ENCODE measurements at regions of chr1 and their contacts with region 1.

Region 1: DNA sequence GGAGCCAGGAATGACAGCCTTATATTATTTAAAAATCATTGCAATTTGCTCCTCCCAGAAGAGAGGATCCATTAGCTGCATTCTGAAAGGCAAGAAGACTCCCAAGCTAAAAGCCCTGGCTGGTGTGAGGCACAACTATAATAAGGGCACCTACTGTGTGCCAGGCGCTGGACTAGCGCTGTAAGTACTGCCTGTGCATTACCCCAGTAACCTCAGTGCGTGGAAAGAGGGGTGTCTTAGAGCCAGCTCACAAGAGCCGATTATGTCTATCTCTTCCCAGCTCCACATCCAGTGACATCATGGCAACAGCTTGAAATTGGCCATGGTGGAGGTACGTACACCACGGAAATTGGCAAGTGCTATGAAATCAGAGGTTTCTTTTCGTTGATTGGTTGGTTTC is 141.7 kb upstream of the IRF2BP2 start:
- DNase-seq: no peak
- ATAC-seq: no peak
- H3K4me3 ChIP-seq: no peak overlapping the region
- H3K27ac ChIP-seq: no peak overlapping the region
- H3K4me1 ChIP-seq: peaks cover 9% of the 10 kb centered on the region
- H3K27me3 ChIP-seq: no peaks in the 10 kb centered on the region
- CTCF ChIP-seq: no peak

Region 2: DNA sequence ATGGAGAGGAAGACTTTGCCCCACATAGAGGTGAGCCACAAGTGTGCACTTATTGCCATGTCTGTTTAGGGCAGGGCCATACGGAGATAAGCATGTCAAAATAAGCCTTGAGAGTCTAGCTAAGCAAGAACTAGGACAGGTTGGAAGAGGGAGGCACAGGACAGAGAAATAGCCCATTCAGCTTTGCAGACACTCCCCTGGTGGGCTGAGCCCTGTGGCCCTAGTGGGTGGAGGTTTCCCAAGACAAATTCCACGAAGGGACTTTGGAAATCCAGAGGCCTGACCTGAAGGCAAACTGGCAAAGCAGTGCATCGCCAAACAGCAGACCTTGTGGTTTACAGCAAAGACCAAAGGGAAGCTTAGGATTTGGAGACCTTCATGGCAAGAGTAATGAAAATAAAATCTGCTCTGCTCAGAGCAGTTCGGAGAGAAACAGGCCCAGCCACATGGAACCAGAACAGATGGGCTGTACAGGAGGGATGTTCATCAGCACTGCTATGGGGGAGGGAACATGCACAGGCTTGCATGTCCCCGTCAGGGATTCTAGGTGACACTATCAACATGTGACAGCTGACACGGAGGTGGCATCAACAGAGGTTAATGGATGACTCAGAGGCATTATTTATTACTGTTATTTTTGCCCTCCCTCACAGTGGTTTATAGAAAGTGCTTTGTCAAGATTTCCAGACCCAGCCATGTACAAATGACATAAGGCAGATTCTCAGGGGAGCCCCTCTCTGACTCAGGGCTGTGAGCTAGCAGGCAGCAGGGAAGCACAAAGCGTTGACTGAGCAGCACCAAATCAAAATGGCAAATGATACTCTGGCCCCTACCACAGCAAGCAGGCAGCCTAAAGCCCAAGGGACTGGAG is 51.6 kb before region 1 on chr1:
- intact Hi-C with region 1: no loop called
- DNase-seq: peak; percentile 43 to 65
- ATAC-seq: peak; percentile 84 to 92 (median 90)
- H3K4me3 ChIP-seq: no peak overlapping the region
- H3K27ac ChIP-seq: peak overlapping the region; percentile 75
- H3K4me1 ChIP-seq: peaks cover 15% of the 10 kb centered on the region
- H3K27me3 ChIP-seq: no peaks in the 10 kb centered on the region
- CTCF ChIP-seq: no peak

Region 3: DNA sequence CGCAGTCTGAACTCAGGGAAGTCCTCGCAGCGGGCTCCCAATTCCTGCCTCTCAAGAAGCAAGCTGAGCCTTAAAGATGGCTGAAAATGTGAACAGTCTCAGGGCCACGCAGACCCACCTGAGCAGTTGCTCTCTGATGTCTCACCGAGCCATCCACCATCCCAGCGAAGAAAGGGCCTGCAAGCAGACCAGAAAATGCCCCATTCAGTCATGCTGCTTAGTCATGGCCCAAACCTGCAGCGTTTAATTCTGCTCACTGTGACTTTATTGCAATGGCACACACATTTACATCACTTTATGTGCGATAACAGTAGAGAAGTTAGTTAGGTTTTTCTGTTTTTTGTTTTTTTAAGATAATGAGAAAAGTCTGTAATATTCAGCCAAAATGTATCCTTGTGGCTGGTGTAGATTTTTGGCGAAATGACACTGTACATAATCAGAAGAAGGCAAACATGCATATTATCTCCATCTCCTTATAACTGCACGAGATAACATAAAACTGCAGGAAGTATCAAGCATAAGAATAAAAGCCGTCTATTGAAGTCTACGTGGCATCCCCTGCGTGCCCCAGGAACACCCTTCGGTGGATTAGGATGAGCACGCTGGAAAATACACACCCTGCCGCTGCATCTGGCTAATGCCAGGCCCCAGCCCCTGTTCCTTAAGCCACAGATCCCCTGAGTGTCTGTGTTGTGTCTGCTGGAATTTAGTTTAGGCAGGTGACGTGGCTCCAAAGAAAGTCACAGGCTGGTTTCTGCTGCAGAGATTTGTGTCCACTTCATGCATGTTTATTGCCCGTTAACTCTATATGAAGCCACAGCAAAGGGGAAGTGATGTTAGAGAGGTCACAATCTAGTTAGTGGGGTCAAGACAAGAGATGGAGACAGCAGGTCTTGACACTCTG is 21.9 kb before region 1 on chr1:
- intact Hi-C with region 1: loop called in 1 of 2 experiments (anchors 2 kb)
- DNase-seq: no peak
- ATAC-seq: no peak
- H3K4me3 ChIP-seq: no peak overlapping the region
- H3K27ac ChIP-seq: no peak overlapping the region
- H3K4me1 ChIP-seq: peaks cover 32% of the 10 kb centered on the region
- H3K27me3 ChIP-seq: no peaks in the 10 kb centered on the region
- CTCF ChIP-seq: no peak